Panc1 (cell line): ENCODE measurements at regions of chr17 and their contacts with region 1.

Region 1: GRCh38 chr17:80455336-80455710 is 21.1 kb downstream of the NPTX1 start:
- DNase-seq: no peak
- ATAC-seq: peak; percentile 57
- H3K4me3 ChIP-seq: peak overlapping the region; percentile 87 to 88
- H3K27ac ChIP-seq: peak overlapping the region; percentile 96
- H3K4me1 ChIP-seq: peaks cover 20% of the 10 kb centered on the region
- H3K27me3 ChIP-seq: no peaks in the 10 kb centered on the region
- CTCF ChIP-seq: no peak

Region 2: DNA sequence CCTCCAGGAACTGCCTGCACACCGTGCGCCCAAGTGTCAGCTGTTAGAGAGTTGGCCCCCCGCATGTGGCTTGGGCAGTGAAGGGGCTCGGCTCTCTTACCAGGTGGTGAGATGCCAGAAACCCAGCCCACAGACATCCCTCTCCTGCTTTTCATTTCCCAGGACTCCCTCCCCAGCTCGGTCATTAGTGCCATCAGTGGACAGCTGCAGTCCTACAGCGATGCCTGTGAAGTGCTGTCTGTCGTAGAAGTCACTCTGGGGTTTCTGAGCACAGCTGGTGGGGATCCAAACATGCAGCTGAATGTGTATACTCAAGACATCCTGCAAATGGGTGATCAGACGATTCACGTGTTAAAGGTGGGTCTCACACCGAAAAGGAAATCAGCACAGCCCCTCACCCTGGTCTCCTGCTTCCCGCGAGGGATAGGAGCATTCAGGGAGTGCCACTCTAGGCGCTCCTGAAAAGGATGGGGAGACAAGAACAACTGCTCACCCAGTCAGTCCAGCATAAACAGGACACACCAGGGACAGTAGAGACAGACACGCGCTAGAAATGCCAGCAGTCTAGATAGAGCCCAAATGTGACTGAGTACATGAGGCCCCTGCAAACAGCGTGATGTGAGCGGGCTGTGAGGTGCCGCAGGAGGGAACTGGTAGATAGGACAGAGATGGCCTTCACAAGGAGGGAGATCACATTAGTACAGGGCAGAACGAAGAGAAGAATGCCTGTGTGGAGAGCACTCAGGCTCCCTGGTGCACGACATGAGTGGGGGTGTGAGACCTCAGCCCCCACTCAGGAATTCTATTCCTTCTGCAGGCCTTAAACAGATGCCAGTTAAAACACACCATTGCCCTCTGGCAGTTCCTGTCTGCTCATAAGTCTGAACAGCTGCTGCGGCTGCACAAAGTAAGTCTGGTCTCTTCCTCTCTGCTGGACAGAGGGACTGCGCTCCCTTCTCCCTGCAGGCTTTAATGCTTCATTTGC is 66.0 kb before region 1 on chr17:
- CTCF ChIA-PET with region 1: no interaction called
- POLR2A ChIA-PET with region 1: no interaction called
- in situ Hi-C with region 1: no loop called
- intact Hi-C with region 1: no loop called
- DNase-seq: no peak
- ATAC-seq: no peak
- H3K4me3 ChIP-seq: no peak overlapping the region
- H3K27ac ChIP-seq: no peak overlapping the region
- H3K4me1 ChIP-seq: no peaks in the 10 kb centered on the region
- H3K27me3 ChIP-seq: no peaks in the 10 kb centered on the region
- CTCF ChIP-seq: no peak

Region 3: GRCh38 chr17:80438806-80439205 is 16.5 kb before region 1 on chr17:
- CTCF ChIA-PET with region 1: interaction called, 14 read pairs
- POLR2A ChIA-PET with region 1: no interaction called
- in situ Hi-C with region 1: no loop called
- intact Hi-C with region 1: no loop called
- DNase-seq: no peak
- ATAC-seq: no peak
- H3K4me3 ChIP-seq: no peak overlapping the region
- H3K27ac ChIP-seq: no peak overlapping the region
- H3K4me1 ChIP-seq: no peaks in the 10 kb centered on the region
- H3K27me3 ChIP-seq: no peaks in the 10 kb centered on the region
- CTCF ChIP-seq: no peak

Region 4: GRCh38 chr17:80882323-80882722 is 427.0 kb after region 1 on chr17:
- CTCF ChIA-PET with region 1: no interaction called
- POLR2A ChIA-PET with region 1: interaction called, 10 read pairs
- in situ Hi-C with region 1: no loop called
- intact Hi-C with region 1: no loop called
- DNase-seq: no peak
- ATAC-seq: no peak
- H3K4me3 ChIP-seq: no peak overlapping the region
- H3K27ac ChIP-seq: no peak overlapping the region
- H3K4me1 ChIP-seq: no peaks in the 10 kb centered on the region
- H3K27me3 ChIP-seq: no peaks in the 10 kb centered on the region
- CTCF ChIP-seq: no peak

Region 5: DNA sequence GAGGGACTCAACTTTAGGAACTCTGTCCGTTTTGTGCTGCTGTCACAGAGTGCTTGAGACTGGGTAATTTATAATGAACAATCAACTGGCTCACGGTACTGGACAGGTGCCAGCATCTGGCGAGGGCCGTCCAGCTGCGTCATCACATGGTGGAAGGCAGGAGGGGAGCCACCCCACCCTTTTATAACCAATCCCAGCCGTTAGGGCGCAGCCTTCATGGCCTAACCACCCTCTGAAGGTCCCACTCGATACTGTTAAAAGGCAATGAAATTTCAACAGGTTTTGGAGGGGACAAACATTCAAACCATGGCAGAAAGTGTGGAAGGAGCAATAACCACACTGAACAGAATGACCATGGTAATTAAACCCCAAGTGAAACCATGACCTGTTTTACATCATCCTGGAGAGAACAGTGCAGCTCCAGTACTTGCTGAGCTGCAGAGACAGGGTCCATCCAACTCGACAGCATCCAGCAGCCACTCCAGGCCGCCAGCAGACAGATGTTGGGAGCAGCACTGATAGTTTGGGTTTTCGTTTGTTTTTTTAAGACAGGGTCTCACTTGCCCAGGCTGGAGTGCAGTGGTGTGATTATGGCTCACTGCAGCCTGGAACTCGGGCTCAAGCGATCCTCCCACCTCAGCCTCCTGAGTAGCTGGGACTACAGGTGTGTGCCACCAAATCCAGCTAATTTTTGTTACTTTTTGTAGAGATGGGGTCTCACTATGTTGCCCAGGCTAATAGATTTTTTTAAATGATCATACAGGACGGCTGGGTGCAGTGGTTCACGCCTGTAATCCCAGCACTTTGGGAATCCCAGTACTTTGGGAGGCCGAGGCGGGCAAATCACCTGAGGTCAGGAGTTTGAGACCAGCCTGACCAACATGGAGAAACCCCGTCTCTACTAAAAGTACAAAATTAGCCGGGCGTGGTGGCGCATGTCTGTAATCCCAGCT is 547.4 kb after region 1 on chr17:
- CTCF ChIA-PET with region 1: no interaction called
- POLR2A ChIA-PET with region 1: interaction called, 10 read pairs
- in situ Hi-C with region 1: no loop called
- intact Hi-C with region 1: no loop called
- DNase-seq: no peak
- ATAC-seq: peak; percentile 36
- H3K4me3 ChIP-seq: no peak overlapping the region
- H3K27ac ChIP-seq: no peak overlapping the region; the same call in 1 of the 2 replicates
- H3K4me1 ChIP-seq: peaks cover 11% of the 10 kb centered on the region
- H3K27me3 ChIP-seq: peaks cover 9% of the 10 kb centered on the region
- CTCF ChIP-seq: no peak